ENCODE measurements at regions of chr3 and their contacts with region 1.

Region 1: DNA sequence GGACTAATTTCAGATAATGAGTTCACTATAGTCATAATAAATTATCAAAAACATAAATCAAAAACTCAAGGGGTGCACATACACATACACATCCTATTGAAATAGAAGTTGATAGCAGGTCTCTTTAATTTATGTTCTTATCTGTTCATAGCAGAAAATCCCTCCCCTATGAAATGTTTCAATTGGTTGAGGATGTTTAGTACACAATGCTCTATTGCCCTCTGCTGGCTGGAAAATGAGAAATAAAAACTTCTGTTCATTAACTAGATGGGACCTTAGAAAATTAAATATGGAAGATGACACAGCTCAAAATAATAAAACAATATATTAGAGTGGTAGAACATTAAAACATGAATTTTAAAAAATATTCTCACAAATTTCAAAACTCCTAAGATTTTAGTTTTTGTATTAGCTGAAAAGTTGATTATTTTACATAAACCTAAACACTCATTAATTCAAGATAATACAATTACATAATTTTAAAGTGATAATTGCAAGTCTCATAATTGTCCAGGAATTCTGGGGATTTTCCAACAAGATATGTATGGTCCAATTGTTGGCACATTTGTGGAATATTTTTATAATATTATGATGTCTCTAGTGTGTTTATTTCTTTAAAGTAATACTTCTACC is 735.0 kb downstream of the ROBO1 start:
- DNase-seq: peak in 2 of 7 donors; percentile 27 to 33
- H3K4me3 ChIP-seq: no peak overlapping the region
- H3K27ac ChIP-seq: no peak overlapping the region
- H3K4me1 ChIP-seq: no peaks in the 10 kb centered on the region
- H3K27me3 ChIP-seq: no peaks in the 10 kb centered on the region
- CTCF ChIP-seq: peak; percentile 50 to 82 (median 76)
- POLR2A ChIP-seq: no peak

Region 2: GRCh38 chr3:78645628-78646310 is 387.0 kb before region 1 on chr3:
- intact Hi-C with region 1: no loop called
- DNase-seq: peak in 1 of 7 donors; percentile 22
- H3K4me3 ChIP-seq: no peak overlapping the region
- H3K27ac ChIP-seq: no peak overlapping the region
- H3K4me1 ChIP-seq: peaks cover 0 to 6% of the 10 kb centered on the region in 2 donors
- H3K27me3 ChIP-seq: no peaks in the 10 kb centered on the region
- CTCF ChIP-seq: peak; percentile 75 to 90 (median 82)
- POLR2A ChIP-seq: no peak

Region 3: DNA sequence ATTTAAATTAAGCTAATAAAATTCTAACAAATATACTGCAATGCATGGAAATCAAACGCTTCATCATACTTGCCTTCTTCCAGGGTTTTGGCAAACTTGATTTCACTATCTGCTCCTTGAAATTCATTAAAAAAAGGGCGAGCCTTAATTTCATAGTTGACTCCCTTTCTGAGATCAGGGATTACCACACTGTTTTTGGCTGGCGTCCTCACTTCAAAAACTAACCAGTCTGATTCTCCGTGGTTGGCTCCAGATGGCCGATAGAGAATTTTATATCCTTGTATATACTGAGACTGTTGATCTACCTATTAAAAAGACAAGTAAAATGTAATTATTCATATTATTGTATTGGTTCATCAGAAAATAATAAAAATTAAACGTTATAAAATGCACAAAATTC is 371.8 kb before region 1 on chr3:
- intact Hi-C with region 1: loop called (anchors 5 kb)
- DNase-seq: no peak
- H3K4me3 ChIP-seq: no peak overlapping the region
- H3K27ac ChIP-seq: no peak overlapping the region
- H3K4me1 ChIP-seq: no peaks in the 10 kb centered on the region
- H3K27me3 ChIP-seq: no peaks in the 10 kb centered on the region
- CTCF ChIP-seq: no peak
- POLR2A ChIP-seq: no peak

Region 4: DNA sequence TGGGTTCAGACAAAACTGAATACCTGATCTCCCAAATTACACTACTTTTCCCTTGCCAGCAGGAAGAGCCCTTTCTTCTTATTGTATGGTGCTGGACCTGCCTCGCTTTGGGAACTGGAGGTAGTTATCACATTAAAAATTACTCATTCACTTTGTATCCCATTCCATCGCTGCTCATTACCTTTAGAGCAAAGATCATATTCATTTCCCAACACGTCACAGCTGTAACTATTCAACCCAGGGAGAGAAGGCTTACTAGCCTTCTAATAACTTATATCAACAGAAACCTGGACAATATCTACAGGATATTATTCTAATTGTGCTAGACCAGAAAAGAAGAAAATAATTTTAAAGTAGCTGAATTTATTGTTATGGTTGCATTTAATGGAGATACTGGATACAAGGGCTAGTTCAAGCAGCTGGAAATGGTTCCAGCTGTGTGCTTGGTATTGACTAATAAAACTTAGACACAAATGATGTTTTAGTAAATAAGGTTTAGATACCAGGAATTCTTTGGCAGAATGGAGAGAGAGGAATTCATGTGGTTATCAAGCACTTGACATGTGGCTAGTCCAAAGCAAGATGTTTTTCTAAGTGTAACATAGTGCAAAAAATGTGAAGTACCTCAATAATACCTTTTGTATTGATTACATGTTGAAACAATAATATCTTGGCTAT is 78.7 kb after region 1 on chr3:
- intact Hi-C with region 1: no loop called
- DNase-seq: no peak
- H3K4me3 ChIP-seq: no peak overlapping the region
- H3K27ac ChIP-seq: no peak overlapping the region
- H3K4me1 ChIP-seq: no peaks in the 10 kb centered on the region
- H3K27me3 ChIP-seq: no peaks in the 10 kb centered on the region
- CTCF ChIP-seq: no peak
- POLR2A ChIP-seq: no peak